ENCODE measurements at regions of chr18 and their contacts with region 1.

Region 1: DNA sequence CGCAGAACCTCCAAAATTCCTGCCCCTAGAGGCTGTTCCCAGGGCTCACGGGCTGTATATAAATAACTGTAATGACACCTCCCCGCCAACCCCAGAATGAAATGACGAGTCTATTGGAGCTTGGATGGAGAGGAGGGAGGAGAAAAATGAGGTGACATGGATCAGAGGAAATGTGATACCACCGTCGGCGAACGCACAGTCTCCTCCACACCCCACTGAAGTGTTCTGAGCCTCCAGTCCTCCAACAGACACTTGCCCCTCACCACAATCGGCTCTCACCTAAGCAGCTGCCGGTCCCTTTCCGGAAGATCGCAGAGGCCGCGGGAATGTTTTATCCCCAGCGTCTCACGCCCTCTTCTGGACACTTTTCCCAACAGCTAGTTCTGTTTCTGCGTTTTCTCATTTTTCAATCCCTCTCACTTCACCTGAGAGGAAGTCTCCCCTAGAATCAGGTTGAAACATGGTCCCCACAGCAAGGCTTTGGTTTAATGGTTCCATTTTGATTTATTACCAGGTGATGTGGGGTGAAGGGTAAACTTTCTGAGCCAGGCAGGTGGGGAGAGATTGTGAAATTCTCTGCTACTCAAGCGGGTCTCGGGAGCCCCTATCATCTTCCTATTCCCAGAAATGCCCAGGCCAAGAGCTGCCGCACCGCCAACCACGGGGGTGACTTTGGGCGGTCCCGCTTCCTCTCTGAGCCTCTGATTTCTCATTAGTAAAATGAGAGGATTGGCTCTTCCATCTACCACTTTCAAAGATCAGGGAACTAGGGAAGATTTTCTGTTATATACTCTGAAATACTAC is 9.1 kb upstream of the MYO5B start:
- DNase-seq: peak; percentile 24
- H3K4me3 ChIP-seq: no peak overlapping the region
- H3K27ac ChIP-seq: no peak overlapping the region
- H3K4me1 ChIP-seq: no peaks in the 10 kb centered on the region
- H3K27me3 ChIP-seq: peaks cover 0 to 10% of the 10 kb centered on the region in 2 experiments
- CTCF ChIP-seq: peak; percentile 50 to 66
- POLR2A ChIP-seq: no peak

Region 2: DNA sequence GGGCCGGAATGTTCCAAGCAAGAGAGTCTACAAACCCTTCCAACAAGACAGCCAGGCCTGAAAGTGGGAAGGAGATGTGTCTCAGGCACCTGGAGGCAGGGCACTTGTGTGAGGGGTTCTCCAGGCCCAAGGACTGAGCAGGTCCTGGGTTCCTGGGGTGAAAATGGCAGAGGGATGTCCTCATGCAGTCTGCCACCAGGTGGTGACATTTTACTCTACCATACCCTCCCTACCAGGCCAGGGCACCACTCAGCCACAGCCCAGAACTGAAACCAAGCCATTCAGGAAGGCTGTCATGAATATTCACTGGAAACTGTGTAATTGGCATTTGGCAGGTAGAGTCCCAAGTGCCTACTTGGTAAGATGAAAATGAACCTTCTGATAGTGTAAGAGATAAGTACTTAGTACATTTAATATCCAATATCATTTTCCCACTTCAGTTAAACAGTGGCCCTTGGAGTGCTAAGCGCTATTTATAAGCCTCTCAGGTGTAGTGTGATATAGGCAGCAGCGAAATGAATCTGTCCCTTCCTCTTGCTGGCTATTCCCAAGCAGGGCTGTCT is 194.1 kb before region 1 on chr18:
- CTCF ChIA-PET with region 1: interaction called, 13 read pairs
- POLR2A ChIA-PET with region 1: no interaction called
- dilution Hi-C with region 1: no loop called
- intact Hi-C with region 1: loop called (anchors 1 kb)
- DNase-seq: peak; percentile 40
- H3K4me3 ChIP-seq: no peak overlapping the region
- H3K27ac ChIP-seq: no peak overlapping the region
- H3K4me1 ChIP-seq: no peaks in the 10 kb centered on the region
- H3K27me3 ChIP-seq: peaks cover 2% of the 10 kb centered on the region in 2 experiments
- CTCF ChIP-seq: peak; percentile 58 to 63
- POLR2A ChIP-seq: no peak

Region 3: DNA sequence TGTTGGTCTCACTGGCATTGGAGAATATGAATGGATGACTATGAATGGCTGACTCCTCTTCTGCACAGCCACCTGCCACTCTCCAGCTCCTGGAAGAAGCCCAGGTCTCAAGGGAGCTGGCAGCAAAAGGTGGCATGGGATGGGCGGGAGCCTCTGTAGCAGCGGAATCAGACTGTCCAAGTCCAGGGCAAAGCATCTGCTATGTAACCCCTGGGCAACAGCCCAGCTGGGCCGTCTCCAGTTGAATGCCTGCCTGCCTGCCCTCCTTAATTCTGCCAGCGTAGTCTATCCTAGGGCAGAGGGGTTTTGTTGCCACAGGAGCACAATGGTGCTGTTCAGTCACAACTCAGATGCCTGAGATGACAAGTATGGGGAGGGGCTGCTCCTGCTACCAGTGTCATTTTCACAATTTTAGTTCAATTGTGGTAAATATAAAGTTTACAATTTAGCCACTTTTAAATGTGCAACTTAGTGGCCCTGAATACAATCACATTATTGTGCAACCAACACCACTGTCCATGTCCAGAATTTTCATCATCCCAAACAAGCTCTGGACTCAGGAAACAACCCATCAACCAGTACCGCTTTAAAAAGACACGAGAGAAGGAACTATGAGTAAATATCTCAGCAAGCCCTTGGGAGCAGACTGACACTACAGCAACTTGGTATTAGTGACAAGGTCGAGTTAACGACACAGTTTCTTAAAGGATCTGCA is 124.3 kb before region 1 on chr18:
- CTCF ChIA-PET with region 1: no interaction called
- POLR2A ChIA-PET with region 1: no interaction called
- dilution Hi-C with region 1: no loop called
- intact Hi-C with region 1: no loop called
- DNase-seq: no peak
- H3K4me3 ChIP-seq: no peak overlapping the region
- H3K27ac ChIP-seq: no peak overlapping the region
- H3K4me1 ChIP-seq: no peaks in the 10 kb centered on the region
- H3K27me3 ChIP-seq: no peaks in the 10 kb centered on the region
- CTCF ChIP-seq: no peak
- POLR2A ChIP-seq: no peak

Region 4: DNA sequence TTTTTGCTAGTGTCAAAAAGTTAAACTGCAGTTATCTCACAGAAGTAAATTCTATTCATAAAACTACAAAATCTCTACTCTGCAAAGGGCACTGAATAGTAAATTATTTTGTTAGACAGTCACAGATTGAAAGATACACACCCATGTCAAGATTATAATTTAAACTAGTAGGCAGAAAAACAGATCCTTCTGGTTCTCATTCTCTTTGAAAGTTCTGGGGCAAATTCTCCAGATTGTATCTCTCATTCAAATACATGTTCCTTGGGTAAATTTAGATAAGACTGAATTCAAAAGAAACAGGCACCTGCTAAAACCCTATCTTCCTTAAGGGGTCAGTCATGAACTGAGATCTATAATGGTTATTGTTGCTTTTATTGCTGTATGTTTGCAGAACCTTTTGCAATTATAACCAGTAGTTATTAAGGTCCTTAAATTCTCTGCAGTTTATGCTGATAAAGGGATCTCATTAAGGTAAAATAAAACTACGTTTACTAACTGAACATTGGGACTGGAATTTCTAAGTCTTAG is 92.7 kb before region 1 on chr18:
- CTCF ChIA-PET with region 1: no interaction called
- POLR2A ChIA-PET with region 1: no interaction called
- dilution Hi-C with region 1: no loop called
- intact Hi-C with region 1: no loop called
- DNase-seq: no peak
- H3K4me3 ChIP-seq: no peak overlapping the region
- H3K27ac ChIP-seq: no peak overlapping the region
- H3K4me1 ChIP-seq: no peaks in the 10 kb centered on the region
- H3K27me3 ChIP-seq: no peaks in the 10 kb centered on the region
- CTCF ChIP-seq: no peak
- POLR2A ChIP-seq: no peak

Region 5: GRCh38 chr18:50218432-50219197 is 14.6 kb after region 1 on chr18:
- CTCF ChIA-PET with region 1: interaction called, 12 read pairs
- POLR2A ChIA-PET with region 1: no interaction called
- dilution Hi-C with region 1: no loop called
- intact Hi-C with region 1: no loop called
- DNase-seq: peak; percentile 20
- H3K4me3 ChIP-seq: no peak overlapping the region
- H3K27ac ChIP-seq: no peak overlapping the region
- H3K4me1 ChIP-seq: no peaks in the 10 kb centered on the region
- H3K27me3 ChIP-seq: no peaks in the 10 kb centered on the region
- CTCF ChIP-seq: peak in 1 of 2 donors; percentile 41
- POLR2A ChIP-seq: no peak

Measured in endothelial cell of umbilical vein (primary cell).